SK-N-SH (cell line): ENCODE measurements at regions of chr3 and their contacts with region 1.

Region 1: GRCh38 chr3:127158614-127159229 is 34.2 kb upstream of the PRR23E start:
- DNase-seq: no peak
- H3K4me3 ChIP-seq: no peak overlapping the region
- H3K27ac ChIP-seq: no peak overlapping the region
- H3K4me1 ChIP-seq: peaks cover 0 to 25% of the 10 kb centered on the region in 2 experiments; a peak in 1 of 4 replicates
- H3K27me3 ChIP-seq: no peaks in the 10 kb centered on the region
- CTCF ChIP-seq: no peak
- EP300 ChIP-seq: no peak
- RAD21 ChIP-seq: no peak

Region 2: GRCh38 chr3:127089486-127090145 is 69.1 kb before region 1 on chr3:
- CTCF ChIA-PET with region 1: no interaction called
- POLR2A ChIA-PET with region 1: no interaction called
- DNase-seq: no peak
- H3K4me3 ChIP-seq: no peak overlapping the region
- H3K27ac ChIP-seq: no peak overlapping the region
- H3K4me1 ChIP-seq: peaks cover 0 to 39% of the 10 kb centered on the region in 2 experiments; a peak in 1 of 4 replicates
- H3K27me3 ChIP-seq: no peaks in the 10 kb centered on the region
- CTCF ChIP-seq: no peak
- EP300 ChIP-seq: 0 out of 4 replicates have a peak, but pooled peaks of 1 of the 2 experiments have one; percentile 4
- RAD21 ChIP-seq: no peak

Region 3: GRCh38 chr3:127172781-127173515 is 14.2 kb after region 1 on chr3:
- CTCF ChIA-PET with region 1: interaction called, 30 read pairs
- POLR2A ChIA-PET with region 1: interaction called, 3 read pairs
- DNase-seq: peak; percentile 92
- H3K4me3 ChIP-seq: peak overlapping the region; percentile 15; a peak in 1 of 4 replicates
- H3K27ac ChIP-seq: peak overlapping the region; percentile 95 to 99
- H3K4me1 ChIP-seq: peaks cover 33 to 56% of the 10 kb centered on the region in 2 experiments
- H3K27me3 ChIP-seq: no peaks in the 10 kb centered on the region
- CTCF ChIP-seq: no peak
- EP300 ChIP-seq: peak; percentile 99
- RAD21 ChIP-seq: no peak; the same call in none of the 2 replicates

Region 4: GRCh38 chr3:127196466-127197299 is 38.0 kb after region 1 on chr3:
- CTCF ChIA-PET with region 1: no interaction called
- POLR2A ChIA-PET with region 1: no interaction called
- DNase-seq: no peak
- H3K4me3 ChIP-seq: no peak overlapping the region
- H3K27ac ChIP-seq: no peak overlapping the region
- H3K4me1 ChIP-seq: peaks cover 0 to 4% of the 10 kb centered on the region in 2 experiments; a peak in 1 of 4 replicates
- H3K27me3 ChIP-seq: no peaks in the 10 kb centered on the region; the same call in 1 of the 2 replicates
- CTCF ChIP-seq: no peak
- EP300 ChIP-seq: no peak
- RAD21 ChIP-seq: no peak

Region 5: DNA sequence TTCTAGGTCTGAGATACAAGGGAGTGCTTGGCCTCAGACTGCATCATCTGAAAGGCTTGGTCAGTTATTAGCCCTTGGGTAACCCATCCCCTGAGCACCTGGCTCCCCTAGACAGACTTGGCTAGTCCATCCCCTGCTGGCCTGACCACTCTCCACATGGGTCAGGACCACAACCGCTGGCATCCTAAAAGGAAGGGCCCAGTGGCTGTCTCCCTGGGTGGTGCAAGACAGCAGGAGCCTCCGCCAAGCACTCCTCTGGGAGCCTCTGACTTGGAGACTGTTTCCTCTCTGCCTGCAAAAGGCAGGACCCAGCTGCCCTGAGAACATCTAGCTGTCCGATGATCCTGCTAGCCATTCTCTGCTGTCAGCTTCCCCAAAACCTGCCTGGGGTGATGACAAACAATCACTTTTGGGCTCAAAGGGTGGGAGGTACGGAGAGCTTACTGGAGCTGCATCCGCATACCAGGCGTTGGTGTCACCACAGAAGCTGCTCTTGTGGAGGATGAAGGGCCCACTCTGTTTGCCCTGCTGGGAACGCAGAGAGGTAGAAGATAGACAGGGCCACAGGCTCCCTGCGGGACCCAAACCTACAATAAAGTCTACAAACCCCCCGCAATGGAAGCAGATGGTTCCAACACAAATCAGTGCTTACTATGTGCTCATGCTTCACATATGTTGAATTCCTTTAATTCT is 237.1 kb after region 1 on chr3:
- CTCF ChIA-PET with region 1: no interaction called
- POLR2A ChIA-PET with region 1: no interaction called
- DNase-seq: no peak
- H3K4me3 ChIP-seq: no peak overlapping the region
- H3K27ac ChIP-seq: no peak overlapping the region
- H3K4me1 ChIP-seq: peaks cover 0 to 4% of the 10 kb centered on the region in 2 experiments; a peak in 1 of 4 replicates
- H3K27me3 ChIP-seq: no peaks in the 10 kb centered on the region
- CTCF ChIP-seq: no peak
- EP300 ChIP-seq: no peak
- RAD21 ChIP-seq: no peak